CD8-positive, alpha-beta memory T cell (primary cell): ENCODE measurements at regions of chr17 and their contacts with region 1.

Region 1: GRCh38 chr17:28598799-28599310 is at the start of gene SPAG5:
- DNase-seq: peak; percentile 92 to 96 (median 95)
- H3K4me3 ChIP-seq: peak within 1 kb of the TSS; percentile 86
- H3K4me3 Mint-ChIP-seq: peak within 1 kb of the TSS; percentile 89 to 99 (median 93)
- H3K27ac ChIP-seq: peak within 1 kb of the TSS; percentile 99
- H3K27ac Mint-ChIP-seq: peak within 1 kb of the TSS; percentile 95 to 100 (median 99)
- H3K4me1 ChIP-seq: peaks cover 5% of the 10 kb centered on the region
- H3K4me1 Mint-ChIP-seq: peaks cover 19 to 25% (median 24%) of the 10 kb centered on the region in 3 donors
- H3K27me3 ChIP-seq: no peaks in the 10 kb centered on the region
- H3K27me3 Mint-ChIP-seq: no peaks in the 10 kb centered on the region
- total RNA-seq, gene SPAG5: 77.8 to 79.7 TPM

Region 2: GRCh38 chr17:28571255-28572122 is 27.4 kb before region 1 on chr17 and contains the start of gene PIGS:
- CTCF ChIA-PET with region 1: interaction called, 10 read pairs
- POLR2A ChIA-PET with region 1: interaction called, 39 read pairs
- DNase-seq: peak; percentile 86 to 93 (median 89)
- H3K4me3 ChIP-seq: peak within 1 kb of the TSS; percentile 98
- H3K4me3 Mint-ChIP-seq: peak within 1 kb of the TSS; percentile 95 to 98 (median 97)
- H3K27ac ChIP-seq: peak within 1 kb of the TSS; percentile 78
- H3K27ac Mint-ChIP-seq: peak within 1 kb of the TSS; percentile 88 to 97 (median 95)
- H3K4me1 ChIP-seq: peaks cover 45% of the 10 kb centered on the region
- H3K4me1 Mint-ChIP-seq: peaks cover 59 to 79% (median 60%) of the 10 kb centered on the region in 3 donors
- H3K27me3 ChIP-seq: no peaks in the 10 kb centered on the region
- H3K27me3 Mint-ChIP-seq: no peaks in the 10 kb centered on the region
- total RNA-seq, gene PIGS: 48.7 to 50.0 TPM

Region 3: GRCh38 chr17:28576758-28577465 is 21.9 kb before region 1 on chr17 and contains the start of gene ALDOC:
- CTCF ChIA-PET with region 1: interaction called, 10 read pairs
- POLR2A ChIA-PET with region 1: interaction called, 39 read pairs
- DNase-seq: peak; percentile 96 to 99 (median 97)
- H3K4me3 ChIP-seq: peak within 1 kb of the TSS; percentile 42
- H3K4me3 Mint-ChIP-seq: peak within 1 kb of the TSS; percentile 81 to 92 (median 83)
- H3K27ac ChIP-seq: peak within 1 kb of the TSS; percentile 55
- H3K27ac Mint-ChIP-seq: peak within 1 kb of the TSS; percentile 40 to 94 (median 88)
- H3K4me1 ChIP-seq: peaks cover 33% of the 10 kb centered on the region
- H3K4me1 Mint-ChIP-seq: peaks cover 28 to 41% (median 31%) of the 10 kb centered on the region in 3 donors
- H3K27me3 ChIP-seq: no peaks in the 10 kb centered on the region
- H3K27me3 Mint-ChIP-seq: no peaks in the 10 kb centered on the region
- total RNA-seq, gene ALDOC: 12.8 to 13.6 TPM